ENCODE measurements at regions of chr6 and their contacts with region 1.

Region 1: DNA sequence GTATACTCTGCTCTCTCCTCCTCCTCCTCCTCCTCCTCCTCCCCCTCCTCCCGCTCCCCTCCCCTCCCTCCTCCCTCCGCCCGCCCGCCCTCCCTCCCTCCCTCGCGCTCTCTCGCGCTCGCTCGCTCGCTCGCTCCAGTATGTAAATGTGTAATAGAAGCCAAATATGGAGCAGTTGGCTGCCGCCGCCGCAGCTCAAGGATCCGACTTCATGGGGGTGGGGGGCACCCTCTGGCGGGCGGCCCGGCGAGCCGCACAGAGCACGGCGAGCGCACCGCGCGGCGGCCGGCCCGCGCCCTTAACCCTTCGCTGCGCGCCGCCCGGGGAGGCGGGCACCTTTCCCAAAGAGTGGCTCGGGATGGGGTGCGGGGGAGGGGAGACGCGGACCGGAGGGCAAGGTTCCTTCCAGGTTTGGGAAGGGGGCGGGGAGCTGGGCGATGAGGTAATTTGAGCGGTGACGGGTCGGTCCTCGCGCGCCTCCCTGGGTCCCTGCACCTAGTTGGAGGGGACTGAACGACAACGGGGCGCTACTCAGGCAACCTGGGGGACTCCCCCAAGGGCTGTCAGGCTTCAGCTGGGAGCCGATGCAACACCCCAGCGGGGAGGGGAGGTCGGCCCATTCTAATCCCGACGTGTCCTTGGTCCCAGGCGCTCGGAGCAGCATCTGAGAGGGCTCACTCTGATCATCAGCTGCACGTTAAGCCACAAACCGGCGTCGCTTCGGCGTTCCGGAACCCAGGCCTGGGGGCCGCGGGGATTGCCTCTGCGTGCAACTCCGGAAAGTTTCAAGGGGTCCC is 409 bp upstream of the ATXN1 start:
- DNase-seq: peak; percentile 89
- H3K4me3 ChIP-seq: peak overlapping the region; percentile 76 to 86 (median 78)
- H3K27ac ChIP-seq: peak overlapping the region; percentile 88
- H3K4me1 ChIP-seq: peaks cover 43% of the 10 kb centered on the region
- H3K27me3 ChIP-seq: no peaks in the 10 kb centered on the region
- CTCF ChIP-seq: peak; percentile 23 to 33
- POLR2A ChIP-seq: no peak

Region 2: DNA sequence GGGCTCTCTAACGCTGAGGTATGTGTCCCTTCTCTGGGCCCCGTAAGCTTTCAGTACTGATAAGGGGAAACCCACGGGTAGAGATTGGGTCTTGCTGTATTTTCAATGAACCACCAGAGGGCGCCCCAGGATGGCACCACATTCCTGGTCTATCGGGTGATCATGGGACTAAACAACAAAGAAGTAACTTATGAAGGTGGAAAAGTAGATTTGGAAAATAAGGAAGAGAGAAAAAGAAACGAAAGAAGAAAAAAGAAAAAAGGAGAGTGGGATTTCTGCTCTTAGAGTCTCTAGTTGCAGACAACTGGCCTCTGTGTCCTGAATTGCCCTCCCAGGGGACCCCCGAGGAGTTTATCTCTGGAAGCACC is 429.5 kb before region 1 on chr6:
- CTCF ChIA-PET with region 1: interaction called, 55 read pairs
- POLR2A ChIA-PET with region 1: no interaction called
- dilution Hi-C with region 1: no loop called
- intact Hi-C with region 1: loop called (anchors 1 kb)
- DNase-seq: peak; percentile 89
- H3K4me3 ChIP-seq: no peak overlapping the region
- H3K27ac ChIP-seq: no peak overlapping the region
- H3K4me1 ChIP-seq: peaks cover 24% of the 10 kb centered on the region
- H3K27me3 ChIP-seq: no peaks in the 10 kb centered on the region
- CTCF ChIP-seq: peak; percentile 82
- POLR2A ChIP-seq: no peak

Region 3: GRCh38 chr6:16639684-16640480 is 121.8 kb before region 1 on chr6:
- CTCF ChIA-PET with region 1: interaction called, 9 read pairs
- POLR2A ChIA-PET with region 1: no interaction called
- dilution Hi-C with region 1: no loop called
- intact Hi-C with region 1: loop called (anchors 2 kb)
- DNase-seq: peak; percentile 68
- H3K4me3 ChIP-seq: no peak overlapping the region
- H3K27ac ChIP-seq: peak overlapping the region; percentile 12
- H3K4me1 ChIP-seq: peaks cover 9% of the 10 kb centered on the region
- H3K27me3 ChIP-seq: no peaks in the 10 kb centered on the region
- CTCF ChIP-seq: no peak
- POLR2A ChIP-seq: no peak

Region 4: DNA sequence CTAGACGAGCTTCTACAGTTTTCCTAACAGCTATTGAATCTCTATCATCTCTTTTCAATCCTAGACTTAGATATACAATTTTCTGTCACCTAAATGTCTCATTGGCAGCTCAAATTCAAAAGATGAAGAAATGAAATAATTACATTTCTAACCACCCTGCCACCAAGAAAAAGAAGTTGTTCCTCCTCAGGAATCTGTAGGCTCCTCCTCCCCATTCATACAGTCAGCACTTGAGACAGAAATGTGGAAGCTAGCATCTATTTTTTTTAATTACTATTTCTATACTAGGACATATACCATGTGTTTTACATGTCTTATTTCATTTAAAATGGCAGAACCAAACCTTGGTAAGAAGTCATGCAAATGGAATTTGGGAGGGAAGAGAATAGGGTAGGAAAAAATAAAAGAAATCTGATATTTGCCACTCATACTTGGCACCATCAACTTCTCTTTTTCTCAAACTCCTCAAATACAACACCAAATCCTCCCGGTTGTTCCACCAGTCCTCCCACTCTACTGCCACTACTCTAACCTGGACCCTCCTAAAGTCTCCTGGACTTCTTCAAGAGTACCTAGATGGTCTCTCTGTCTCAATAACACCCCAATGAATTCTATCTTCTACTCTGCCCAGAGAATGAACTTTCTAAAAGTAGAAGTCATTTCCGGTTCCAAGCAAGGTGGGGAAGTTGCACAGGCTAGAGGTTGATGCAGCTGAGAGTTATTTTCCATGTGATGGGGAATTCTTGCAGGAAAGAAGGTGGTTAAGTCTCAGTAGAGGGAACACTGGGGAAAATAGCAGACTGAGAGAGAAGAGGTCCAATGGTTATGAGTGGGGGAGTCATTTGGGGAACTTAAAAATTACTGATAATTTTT is 54.5 kb before region 1 on chr6:
- CTCF ChIA-PET with region 1: interaction called, 36 read pairs
- POLR2A ChIA-PET with region 1: no interaction called
- dilution Hi-C with region 1: no loop called
- intact Hi-C with region 1: no loop called
- DNase-seq: peak; percentile 29
- H3K4me3 ChIP-seq: no peak overlapping the region
- H3K27ac ChIP-seq: no peak overlapping the region
- H3K4me1 ChIP-seq: peaks cover 25% of the 10 kb centered on the region
- H3K27me3 ChIP-seq: no peaks in the 10 kb centered on the region
- CTCF ChIP-seq: no peak
- POLR2A ChIP-seq: no peak

Region 5: DNA sequence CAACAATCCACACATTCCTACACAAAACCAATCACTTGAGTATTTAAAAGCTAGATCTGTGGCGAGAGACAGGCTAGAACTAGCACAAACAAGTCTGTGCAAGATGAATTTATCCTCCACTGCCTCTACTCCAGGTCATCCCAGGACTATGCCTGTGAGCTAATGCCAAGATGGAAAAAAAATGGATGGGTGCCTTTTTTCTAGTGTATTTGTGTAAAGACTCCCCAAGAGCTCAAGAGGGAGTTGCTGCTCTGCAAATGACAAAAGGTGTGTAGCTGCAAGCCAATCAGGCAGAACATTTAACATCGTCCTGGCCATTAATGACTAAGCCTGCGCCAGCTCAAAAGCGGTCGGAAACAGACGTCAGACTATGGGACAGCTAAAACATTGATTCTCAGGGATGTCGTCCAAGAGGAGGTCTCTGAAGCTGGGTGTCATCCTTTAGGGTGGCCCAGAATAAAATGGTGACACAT is 22.3 kb before region 1 on chr6:
- CTCF ChIA-PET with region 1: interaction called, 12 read pairs
- POLR2A ChIA-PET with region 1: interaction called, 5 read pairs
- dilution Hi-C with region 1: no loop called
- intact Hi-C with region 1: loop called (anchors 1 kb)
- DNase-seq: no peak
- H3K4me3 ChIP-seq: no peak overlapping the region
- H3K27ac ChIP-seq: no peak overlapping the region
- H3K4me1 ChIP-seq: peaks cover 29% of the 10 kb centered on the region
- H3K27me3 ChIP-seq: no peaks in the 10 kb centered on the region
- CTCF ChIP-seq: no peak
- POLR2A ChIP-seq: no peak

Region 6: GRCh38 chr6:17193106-17193775 is 431.6 kb after region 1 on chr6:
- CTCF ChIA-PET with region 1: no interaction called
- POLR2A ChIA-PET with region 1: no interaction called
- dilution Hi-C with region 1: no loop called
- intact Hi-C with region 1: no loop called
- DNase-seq: no peak
- H3K4me3 ChIP-seq: no peak overlapping the region
- H3K27ac ChIP-seq: no peak overlapping the region
- H3K4me1 ChIP-seq: no peaks in the 10 kb centered on the region
- H3K27me3 ChIP-seq: peaks cover 0 to 2% of the 10 kb centered on the region in 2 experiments
- CTCF ChIP-seq: no peak
- POLR2A ChIP-seq: no peak

Region 7: GRCh38 chr6:17621003-17621402 is 859.3 kb after region 1 on chr6:
- CTCF ChIA-PET with region 1: no interaction called
- POLR2A ChIA-PET with region 1: no interaction called
- dilution Hi-C with region 1: no loop called
- intact Hi-C with region 1: no loop called
- DNase-seq: no peak
- H3K4me3 ChIP-seq: no peak overlapping the region
- H3K27ac ChIP-seq: no peak overlapping the region
- H3K4me1 ChIP-seq: no peaks in the 10 kb centered on the region
- H3K27me3 ChIP-seq: no peaks in the 10 kb centered on the region
- CTCF ChIP-seq: no peak
- POLR2A ChIP-seq: no peak